Mammary epithelial cell (primary cell): ENCODE measurements at regions of chr10 and their contacts with region 1.

Region 1: DNA sequence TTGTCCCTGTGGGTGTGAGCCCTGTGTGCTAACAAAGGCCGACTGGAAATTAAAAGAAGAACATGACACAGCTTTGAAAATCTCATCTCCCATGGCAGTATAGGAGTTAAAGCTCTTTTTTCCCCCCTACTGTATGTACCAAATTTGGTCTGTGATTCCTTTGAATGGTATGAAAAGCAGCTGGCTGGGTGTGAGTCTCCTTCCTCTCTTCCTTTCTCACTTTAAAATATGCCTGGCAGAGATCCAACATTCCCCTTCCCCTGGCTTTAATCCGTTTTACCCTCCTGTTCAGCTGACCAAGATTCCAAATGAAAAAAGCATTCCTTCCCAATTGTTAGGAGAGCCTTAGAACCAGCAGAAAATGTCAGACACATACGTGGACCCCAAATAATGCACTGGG is 225.0 kb upstream of the CELF2 start:
- DNase-seq: peak; percentile 52
- H3K4me3 ChIP-seq: peak overlapping the region in 2 of 3 experiments; percentile 13 to 52
- H3K27ac ChIP-seq: peak overlapping the region; percentile 47
- H3K4me1 ChIP-seq: peaks cover 49% of the 10 kb centered on the region
- H3K27me3 ChIP-seq: no peaks in the 10 kb centered on the region
- CTCF ChIP-seq: no peak

Region 2: GRCh38 chr10:10807106-10807505 is 14.4 kb after region 1 on chr10:
- CTCF ChIA-PET with region 1: no interaction called
- dilution Hi-C with region 1: no loop called
- in situ Hi-C with region 1: no loop called
- intact Hi-C with region 1: loop called (anchors 2 kb)
- DNase-seq: no peak
- H3K4me3 ChIP-seq: no peak overlapping the region
- H3K27ac ChIP-seq: no peak overlapping the region
- H3K4me1 ChIP-seq: peaks cover 32% of the 10 kb centered on the region
- H3K27me3 ChIP-seq: no peaks in the 10 kb centered on the region
- CTCF ChIP-seq: no peak